ENCODE measurements at regions of chr7 and their contacts with region 1.

Region 1: GRCh38 chr7:68078157-68078710 is 1081.6 kb downstream of the TYW1 start:
- DNase-seq: no peak
- ATAC-seq: no peak
- H3K4me3 ChIP-seq: no peak overlapping the region
- H3K27ac ChIP-seq: no peak overlapping the region
- H3K4me1 ChIP-seq: no peaks in the 10 kb centered on the region
- H3K27me3 ChIP-seq: no peaks in the 10 kb centered on the region
- CTCF ChIP-seq: no peak
- EP300 ChIP-seq: no peak
- POLR2A ChIP-seq: no peak
- RAD21 ChIP-seq: no peak

Region 2: DNA sequence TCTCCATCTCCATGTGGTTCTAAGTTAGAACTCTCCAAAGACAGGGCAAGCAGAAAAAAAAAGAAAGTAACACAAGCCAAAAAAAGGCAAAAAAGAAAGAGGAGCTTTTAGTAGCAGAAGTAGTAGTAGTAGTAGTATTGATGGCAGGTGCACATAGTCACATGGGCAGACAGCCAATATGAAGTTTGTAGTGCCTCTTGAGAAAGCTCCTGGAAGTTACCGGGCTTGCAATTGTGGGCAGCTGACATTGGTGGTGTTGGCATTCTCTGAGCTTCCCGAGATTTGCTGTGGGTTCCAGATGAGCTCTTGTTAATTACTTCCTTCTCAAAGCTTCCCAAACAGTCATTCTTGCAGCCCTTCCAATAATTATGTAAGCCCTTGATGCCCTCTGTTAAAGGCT is 46.9 kb after region 1 on chr7:
- CTCF ChIA-PET with region 1: no interaction called
- POLR2A ChIA-PET with region 1: no interaction called
- in situ Hi-C with region 1: no loop called
- intact Hi-C with region 1: loop called (anchors 2 kb)
- DNase-seq: no peak
- ATAC-seq: no peak
- H3K4me3 ChIP-seq: no peak overlapping the region
- H3K27ac ChIP-seq: no peak overlapping the region
- H3K4me1 ChIP-seq: no peaks in the 10 kb centered on the region
- H3K27me3 ChIP-seq: peaks cover 0 to 2% of the 10 kb centered on the region in 2 experiments; a peak in 1 of 5 replicates
- CTCF ChIP-seq: no peak
- EP300 ChIP-seq: no peak
- POLR2A ChIP-seq: no peak
- RAD21 ChIP-seq: no peak

Region 3: DNA sequence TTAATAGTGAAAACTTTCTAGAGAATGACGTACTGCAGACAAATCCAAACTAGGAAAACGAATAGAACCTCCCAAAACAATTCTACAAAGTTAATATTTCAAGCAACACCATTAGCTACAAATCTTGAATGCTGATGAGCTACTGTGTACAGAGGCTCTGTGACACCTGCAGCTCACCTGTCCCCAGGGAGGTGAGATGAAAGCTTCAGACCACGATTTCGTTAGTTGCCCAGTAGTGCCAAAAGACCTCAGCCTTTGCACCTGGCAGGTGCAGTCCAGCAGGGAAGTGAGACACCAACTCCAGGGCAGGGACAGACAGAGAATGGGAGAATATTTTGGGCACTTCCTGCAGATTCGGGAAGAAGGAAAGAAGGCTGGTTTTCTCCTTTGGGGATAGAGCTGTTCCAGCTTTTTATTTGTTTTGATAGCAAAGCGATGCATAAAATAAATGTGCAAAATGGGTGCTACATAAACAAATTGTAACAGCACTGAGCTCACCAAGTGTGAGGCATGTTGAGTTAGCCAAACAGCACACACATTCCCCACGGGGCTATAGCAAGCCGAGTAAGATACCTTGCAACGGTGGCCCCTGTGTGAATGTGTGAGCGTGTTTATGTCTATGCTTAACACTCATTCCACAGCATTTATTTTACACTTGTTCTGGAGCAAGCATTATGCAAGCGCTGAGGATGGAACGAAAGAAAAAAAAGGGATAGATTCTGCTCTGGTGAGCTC is 495.2 kb after region 1 on chr7:
- CTCF ChIA-PET with region 1: no interaction called
- POLR2A ChIA-PET with region 1: no interaction called
- in situ Hi-C with region 1: no loop called
- intact Hi-C with region 1: no loop called
- DNase-seq: no peak
- ATAC-seq: no peak
- H3K4me3 ChIP-seq: no peak overlapping the region
- H3K27ac ChIP-seq: no peak overlapping the region
- H3K4me1 ChIP-seq: no peaks in the 10 kb centered on the region
- H3K27me3 ChIP-seq: no peaks in the 10 kb centered on the region
- CTCF ChIP-seq: no peak
- EP300 ChIP-seq: no peak
- POLR2A ChIP-seq: no peak
- RAD21 ChIP-seq: no peak

Measured in HepG2 (cell line).